ENCODE measurements at regions of chr1 and their contacts with region 1.

Region 1: GRCh38 chr1:156383023-156383422 is 14.0 kb downstream of the RHBG start:
- DNase-seq: peak; percentile 76 to 77
- H3K4me3 ChIP-seq: no peak overlapping the region
- H3K4me3 Mint-ChIP-seq: no peak overlapping the region
- H3K27ac Mint-ChIP-seq: no peak overlapping the region
- H3K4me1 ChIP-seq: peaks cover 21% of the 10 kb centered on the region
- H3K4me1 Mint-ChIP-seq: no peaks in the 10 kb centered on the region
- H3K27me3 ChIP-seq: no peaks in the 10 kb centered on the region
- H3K27me3 Mint-ChIP-seq: no peaks in the 10 kb centered on the region
- CTCF ChIP-seq: peak; percentile 85 to 90

Region 2: DNA sequence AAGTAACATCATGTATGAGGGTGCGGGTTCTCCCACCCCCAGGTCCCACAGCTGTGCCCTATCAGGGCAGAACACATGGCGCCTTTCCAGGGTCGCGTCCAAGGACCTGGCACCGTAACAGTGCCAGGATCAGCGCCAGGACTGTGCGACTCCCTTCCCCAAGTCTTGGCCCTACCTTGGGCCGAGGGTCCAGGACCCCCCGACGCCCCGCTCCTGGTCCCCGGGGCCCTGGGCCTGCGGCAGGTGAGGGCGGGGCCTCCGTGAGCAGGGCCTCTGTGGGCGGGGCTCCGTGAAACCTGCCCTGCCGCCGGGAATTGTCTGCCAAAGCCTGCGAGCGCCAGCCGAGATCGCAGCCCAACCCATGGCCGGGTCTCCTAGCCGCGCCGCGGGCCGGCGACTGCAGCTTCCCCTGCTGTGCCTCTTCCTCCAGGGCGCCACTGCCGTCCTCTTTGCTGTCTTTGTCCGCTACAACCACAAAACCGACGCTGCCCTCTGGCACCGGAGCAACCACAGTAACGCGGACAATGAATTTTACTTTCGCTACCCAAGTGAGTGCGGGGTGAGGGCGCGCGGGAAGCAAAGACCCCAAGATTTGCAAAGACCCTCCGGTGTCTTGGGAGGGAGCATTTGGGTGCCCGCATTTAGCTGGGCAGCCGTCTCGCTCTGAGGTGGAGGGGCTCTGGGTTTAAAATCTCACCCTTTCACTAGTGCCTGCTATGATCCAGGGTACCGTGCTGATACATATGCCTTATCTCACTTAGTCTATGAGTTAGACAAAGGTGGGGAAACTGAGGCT is 13.9 kb before region 1 on chr1 and contains the start of gene RHBG:
- CTCF ChIA-PET with region 1: interaction called, 16 read pairs
- POLR2A ChIA-PET with region 1: interaction called, 3 read pairs
- intact Hi-C with region 1: no loop called
- DNase-seq: peak; percentile 67 to 74
- H3K4me3 ChIP-seq: peak within 1 kb of the TSS; percentile 51
- H3K4me3 Mint-ChIP-seq: peak within 1 kb of the TSS; percentile 75
- H3K27ac Mint-ChIP-seq: peak within 1 kb of the TSS; percentile 72
- H3K4me1 ChIP-seq: peaks cover 65% of the 10 kb centered on the region
- H3K4me1 Mint-ChIP-seq: peaks cover 23% of the 10 kb centered on the region
- H3K27me3 ChIP-seq: no peaks in the 10 kb centered on the region
- H3K27me3 Mint-ChIP-seq: no peaks in the 10 kb centered on the region
- CTCF ChIP-seq: no peak
- total RNA-seq, gene RHBG: 4.6 and 6.5 TPM in 2 replicates

Region 3: GRCh38 chr1:156407344-156407743 is 24.3 kb after region 1 on chr1:
- CTCF ChIA-PET with region 1: interaction called, 13 read pairs
- POLR2A ChIA-PET with region 1: interaction called, 3 read pairs
- intact Hi-C with region 1: no loop called
- DNase-seq: no peak
- H3K4me3 ChIP-seq: no peak overlapping the region
- H3K4me3 Mint-ChIP-seq: no peak overlapping the region
- H3K27ac Mint-ChIP-seq: no peak overlapping the region
- H3K4me1 ChIP-seq: peaks cover 20% of the 10 kb centered on the region
- H3K4me1 Mint-ChIP-seq: no peaks in the 10 kb centered on the region
- H3K27me3 ChIP-seq: no peaks in the 10 kb centered on the region
- H3K27me3 Mint-ChIP-seq: no peaks in the 10 kb centered on the region
- CTCF ChIP-seq: no peak

Region 4: DNA sequence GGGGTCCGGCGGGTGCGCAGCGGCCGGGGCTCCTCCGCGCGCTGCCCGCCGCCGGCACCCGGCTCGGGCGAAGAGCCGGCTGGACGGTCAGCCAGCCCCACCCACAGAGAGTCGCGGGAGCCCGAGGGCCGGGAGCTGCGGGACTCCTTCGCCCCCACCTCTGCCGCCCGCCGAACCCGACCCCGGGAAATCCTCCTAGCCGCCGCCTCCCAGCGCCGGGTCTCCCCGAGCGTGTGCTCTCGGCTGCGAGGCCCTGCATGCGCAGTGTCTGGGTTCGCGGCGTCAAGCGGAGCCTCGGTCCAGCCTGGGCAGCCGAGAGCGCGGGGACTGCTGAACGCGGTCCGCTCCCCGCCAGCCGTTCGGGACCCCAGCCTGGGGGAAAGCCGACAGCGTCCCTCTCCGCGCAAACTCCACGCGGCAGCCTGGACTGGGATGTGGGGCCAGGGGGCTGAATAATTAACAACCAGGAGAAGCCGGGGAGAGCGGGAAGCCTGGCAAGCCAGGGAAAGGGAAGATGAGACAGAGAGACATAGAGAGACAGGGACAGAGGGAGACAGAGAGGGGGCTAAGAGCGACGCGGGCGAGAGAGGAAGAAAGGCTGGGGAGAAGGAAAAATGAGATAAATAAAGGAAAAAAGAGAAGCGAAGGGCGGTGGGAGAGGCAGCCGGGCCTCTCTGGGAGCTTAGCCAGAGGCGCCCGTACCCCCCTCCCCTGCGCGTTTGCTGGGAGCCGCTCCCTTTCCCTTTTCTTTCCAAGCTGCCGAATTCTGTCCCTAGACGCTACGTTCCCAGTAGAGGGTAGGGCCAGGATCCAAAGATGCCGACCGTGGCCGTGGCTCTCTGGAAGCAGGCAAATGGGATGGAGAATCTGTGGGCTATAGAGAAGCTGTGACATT is 53.4 kb after region 1 on chr1:
- CTCF ChIA-PET with region 1: interaction called, 47 read pairs
- POLR2A ChIA-PET with region 1: no interaction called
- intact Hi-C with region 1: no loop called
- DNase-seq: peak in 1 of 2 experiments; percentile 20
- H3K4me3 ChIP-seq: peak overlapping the region; percentile 25
- H3K4me3 Mint-ChIP-seq: peak overlapping the region; percentile 69
- H3K27ac Mint-ChIP-seq: no peak overlapping the region
- H3K4me1 ChIP-seq: peaks cover 4% of the 10 kb centered on the region; the same call in 1 of the 2 replicates
- H3K4me1 Mint-ChIP-seq: peaks cover 12% of the 10 kb centered on the region
- H3K27me3 ChIP-seq: peaks cover 3% of the 10 kb centered on the region; the same call in 1 of the 2 replicates
- H3K27me3 Mint-ChIP-seq: peaks cover 55% of the 10 kb centered on the region
- CTCF ChIP-seq: no peak

Region 5: DNA sequence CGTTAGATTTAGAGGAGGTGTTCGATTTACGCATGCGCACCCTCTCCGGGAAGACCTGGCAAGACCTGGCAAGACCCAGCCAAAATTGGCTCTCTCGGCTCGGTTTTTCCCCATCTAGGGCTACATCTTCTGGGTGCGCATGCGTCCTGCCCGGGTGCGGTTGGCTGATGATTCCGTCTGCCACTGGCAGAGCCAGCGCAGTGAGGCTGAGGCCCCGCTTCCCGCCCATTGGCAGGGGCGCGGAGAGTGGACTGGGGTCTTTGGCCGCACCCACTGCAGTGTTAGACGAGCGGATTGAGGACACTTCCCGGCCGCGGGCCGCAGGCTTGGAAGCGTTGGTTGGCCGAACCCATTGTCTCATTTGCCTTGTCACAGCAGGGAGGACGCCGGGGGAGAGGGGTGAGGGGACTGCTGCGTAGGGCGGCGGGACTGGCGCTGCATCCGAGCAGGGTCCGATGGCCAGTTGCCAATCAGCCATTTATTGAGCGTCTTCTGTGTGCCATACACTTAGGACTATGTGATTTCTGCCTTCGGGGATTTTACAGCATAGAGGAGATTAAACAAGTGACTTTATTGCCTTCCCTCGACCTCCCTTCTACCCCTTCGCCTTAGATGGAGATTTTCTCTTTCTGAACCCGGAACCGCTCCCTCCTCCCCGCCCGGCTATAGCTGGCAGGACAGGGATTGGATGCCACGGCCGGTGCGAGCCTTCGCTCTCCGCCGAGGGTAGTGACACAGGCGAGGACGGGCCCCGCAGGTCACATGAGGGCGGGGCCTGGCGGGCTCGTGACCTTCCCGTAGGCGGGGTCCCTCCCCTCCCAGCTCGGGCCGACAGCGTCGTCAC is 73.8 kb after region 1 on chr1:
- CTCF ChIA-PET with region 1: interaction called, 30 read pairs
- POLR2A ChIA-PET with region 1: interaction called, 5 read pairs
- intact Hi-C with region 1: no loop called
- DNase-seq: peak; percentile 98
- H3K4me3 ChIP-seq: peak overlapping the region; percentile 70
- H3K4me3 Mint-ChIP-seq: peak overlapping the region; percentile 88
- H3K27ac Mint-ChIP-seq: peak overlapping the region; percentile 90
- H3K4me1 ChIP-seq: peaks cover 13% of the 10 kb centered on the region
- H3K4me1 Mint-ChIP-seq: peaks cover 1% of the 10 kb centered on the region
- H3K27me3 ChIP-seq: no peaks in the 10 kb centered on the region
- H3K27me3 Mint-ChIP-seq: no peaks in the 10 kb centered on the region
- CTCF ChIP-seq: no peak

Region 6: GRCh38 chr1:156608036-156608674 is 225.1 kb after region 1 on chr1:
- CTCF ChIA-PET with region 1: interaction called, 10 read pairs
- POLR2A ChIA-PET with region 1: no interaction called
- intact Hi-C with region 1: loop called (anchors 10 kb)
- DNase-seq: peak; percentile 71 to 78
- H3K4me3 ChIP-seq: no peak overlapping the region
- H3K4me3 Mint-ChIP-seq: no peak overlapping the region
- H3K27ac Mint-ChIP-seq: no peak overlapping the region
- H3K4me1 ChIP-seq: 0 out of 2 replicates have a peak, but pooled peaks cover 4% of the 10 kb centered on the region
- H3K4me1 Mint-ChIP-seq: peaks cover 16% of the 10 kb centered on the region
- H3K27me3 ChIP-seq: no peaks in the 10 kb centered on the region
- H3K27me3 Mint-ChIP-seq: no peaks in the 10 kb centered on the region
- CTCF ChIP-seq: peak; percentile 82 to 83

Region 7: GRCh38 chr1:156675210-156676113 is 292.4 kb after region 1 on chr1:
- CTCF ChIA-PET with region 1: no interaction called
- POLR2A ChIA-PET with region 1: no interaction called
- intact Hi-C with region 1: no loop called
- DNase-seq: no peak
- H3K4me3 ChIP-seq: peak overlapping the region; percentile 69
- H3K4me3 Mint-ChIP-seq: peak overlapping the region; percentile 86
- H3K27ac Mint-ChIP-seq: no peak overlapping the region
- H3K4me1 ChIP-seq: peaks cover 21% of the 10 kb centered on the region; the same call in 1 of the 2 replicates
- H3K4me1 Mint-ChIP-seq: peaks cover 8% of the 10 kb centered on the region
- H3K27me3 ChIP-seq: 0 out of 2 replicates have a peak, but pooled peaks cover 2% of the 10 kb centered on the region
- H3K27me3 Mint-ChIP-seq: peaks cover 7% of the 10 kb centered on the region
- CTCF ChIP-seq: no peak

Measured in Caco-2 (cell line).